Esophagus squamous epithelium (tissue), 5 donors: ENCODE measurements at regions of chr18 and their contacts with region 1.

Region 1: DNA sequence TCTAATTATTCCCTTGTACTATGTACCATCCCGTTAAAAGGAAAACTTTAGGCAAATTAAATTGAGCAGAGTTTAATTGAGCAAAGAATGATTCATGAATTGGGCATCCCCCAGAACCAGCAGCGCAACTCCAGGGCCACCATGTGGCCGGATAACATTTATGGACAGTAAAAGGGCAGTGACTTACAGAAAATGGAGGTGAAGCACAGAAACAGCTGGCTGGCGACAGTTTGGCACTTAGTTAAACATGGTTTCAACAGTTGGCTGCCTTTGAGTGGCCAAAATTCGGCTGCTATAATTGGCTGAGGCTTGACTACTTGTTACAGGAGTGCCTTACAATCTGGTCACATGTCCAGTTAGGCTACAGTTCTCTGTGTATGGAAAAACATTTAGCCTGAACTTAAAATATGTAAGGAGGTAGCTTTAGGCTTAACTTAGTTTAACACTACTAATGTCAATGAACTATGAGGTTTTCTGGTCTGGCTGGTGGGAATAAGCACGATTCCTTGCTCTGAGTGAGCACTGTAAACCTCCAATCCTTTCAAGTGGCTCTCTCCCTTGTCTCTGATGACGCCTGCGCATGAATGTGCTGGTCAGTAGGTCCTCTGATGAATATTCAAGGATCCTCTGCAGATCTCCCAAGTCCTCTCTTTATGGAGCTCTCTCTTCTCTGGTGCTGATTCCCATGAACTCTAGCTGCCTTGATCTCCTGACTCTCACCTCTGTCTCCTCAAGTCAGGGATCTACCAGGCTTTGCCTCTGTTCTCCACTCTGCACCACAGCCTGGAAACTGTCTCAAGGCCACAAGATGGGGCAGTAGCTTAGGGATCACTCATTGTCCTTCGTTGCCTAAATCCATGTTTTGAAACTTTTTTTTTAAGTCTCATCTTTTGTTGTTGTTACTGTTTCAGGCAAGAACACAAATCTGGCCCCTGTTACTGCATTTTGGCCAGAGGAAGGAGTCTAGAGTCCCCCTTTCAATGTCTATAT is 24.4 kb upstream of the RAB31 start:
- DNase-seq: no peak
- H3K4me3 ChIP-seq: no peak overlapping the region
- H3K27ac ChIP-seq: peak overlapping the region; percentile 30 to 75 (median 54)
- H3K4me1 ChIP-seq: peaks cover 20 to 39% (median 20%) of the 10 kb centered on the region in 3 donors
- H3K27me3 ChIP-seq: no peaks in the 10 kb centered on the region
- CTCF ChIP-seq: peak in 4 of 6 experiments; percentile 26 to 46 (median 40)
- POLR2A ChIP-seq: no peak

Region 2: DNA sequence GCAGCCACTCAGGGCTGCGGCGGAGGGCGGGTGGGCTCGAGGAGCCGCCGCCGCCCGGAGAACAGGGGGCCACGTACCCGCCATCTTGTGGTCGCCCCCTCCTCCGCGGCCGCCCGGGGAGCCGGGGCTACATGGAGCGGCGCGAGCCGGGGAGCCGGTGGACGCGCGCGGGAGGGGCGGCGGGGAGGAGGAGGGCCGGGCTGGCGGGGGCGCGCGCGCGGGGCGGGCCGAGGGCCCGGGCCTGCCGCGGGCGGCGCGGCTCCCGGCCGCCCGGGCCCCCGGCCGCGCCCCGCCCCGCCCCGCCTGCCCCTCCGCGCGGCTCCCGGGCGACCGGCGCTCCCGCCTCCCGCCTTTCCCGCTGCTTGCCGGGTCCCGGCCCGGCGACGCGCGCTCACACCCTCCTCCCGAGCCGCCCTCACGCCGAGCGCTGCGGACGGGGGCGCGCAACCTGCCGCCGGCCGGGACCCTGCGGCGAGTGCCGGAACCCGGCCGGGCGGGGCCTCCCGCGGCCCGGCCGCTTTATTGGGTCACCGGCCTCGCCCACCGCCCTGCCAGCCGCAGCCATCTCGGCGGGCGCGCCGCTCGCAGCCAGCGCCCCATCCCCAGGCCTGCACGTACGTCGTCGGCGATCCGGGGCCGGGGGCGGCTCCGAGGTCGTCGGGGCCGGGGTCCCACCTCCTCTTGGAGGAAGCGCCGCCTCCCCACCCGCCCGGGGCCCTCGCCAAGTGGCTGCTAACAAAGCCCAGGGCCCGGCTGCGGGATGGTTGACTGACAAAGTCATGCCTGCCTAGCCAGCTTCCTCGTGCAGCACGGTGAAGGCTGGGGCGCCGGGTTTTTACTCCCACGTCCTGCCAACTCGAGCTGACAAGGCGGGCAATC is 69.1 kb before region 1 on chr18 and contains the start of gene PPP4R1:
- intact Hi-C with region 1: loop called (anchors 10 kb)
- DNase-seq: peak; percentile 40
- H3K4me3 ChIP-seq: peak within 1 kb of the TSS; percentile 80 to 98 (median 96)
- H3K27ac ChIP-seq: peak within 1 kb of the TSS; percentile 97 to 100 (median 100)
- H3K4me1 ChIP-seq: peaks cover 11 to 72% (median 13%) of the 10 kb centered on the region in 3 donors
- H3K27me3 ChIP-seq: no peaks in the 10 kb centered on the region
- CTCF ChIP-seq: no peak
- POLR2A ChIP-seq: peak in 2 of 4 donors; percentile 57 to 61
- total RNA-seq, gene PPP4R1: 129 to 233 (median 186) TPM